ENCODE measurements at regions of chr4 and their contacts with region 1.

Region 1: GRCh38 chr4:88600176-88600838 is 8.0 kb downstream of the HERC3 start:
- DNase-seq: no peak
- ATAC-seq: no peak
- H3K4me3 Mint-ChIP-seq: no peak overlapping the region
- H3K27ac Mint-ChIP-seq: no peak overlapping the region
- H3K4me1 Mint-ChIP-seq: peaks cover 55% of the 10 kb centered on the region
- H3K27me3 Mint-ChIP-seq: no peaks in the 10 kb centered on the region
- CTCF ChIP-seq: no peak

Region 2: GRCh38 chr4:87824352-87824751 is 776.0 kb before region 1 on chr4:
- CTCF ChIA-PET with region 1: no interaction called
- POLR2A ChIA-PET with region 1: no interaction called
- intact Hi-C with region 1: no loop called
- DNase-seq: no peak
- ATAC-seq: no peak
- H3K4me3 Mint-ChIP-seq: no peak overlapping the region
- H3K27ac Mint-ChIP-seq: no peak overlapping the region
- H3K4me1 Mint-ChIP-seq: no peaks in the 10 kb centered on the region
- H3K27me3 Mint-ChIP-seq: peaks cover 19% of the 10 kb centered on the region
- CTCF ChIP-seq: no peak

Region 3: DNA sequence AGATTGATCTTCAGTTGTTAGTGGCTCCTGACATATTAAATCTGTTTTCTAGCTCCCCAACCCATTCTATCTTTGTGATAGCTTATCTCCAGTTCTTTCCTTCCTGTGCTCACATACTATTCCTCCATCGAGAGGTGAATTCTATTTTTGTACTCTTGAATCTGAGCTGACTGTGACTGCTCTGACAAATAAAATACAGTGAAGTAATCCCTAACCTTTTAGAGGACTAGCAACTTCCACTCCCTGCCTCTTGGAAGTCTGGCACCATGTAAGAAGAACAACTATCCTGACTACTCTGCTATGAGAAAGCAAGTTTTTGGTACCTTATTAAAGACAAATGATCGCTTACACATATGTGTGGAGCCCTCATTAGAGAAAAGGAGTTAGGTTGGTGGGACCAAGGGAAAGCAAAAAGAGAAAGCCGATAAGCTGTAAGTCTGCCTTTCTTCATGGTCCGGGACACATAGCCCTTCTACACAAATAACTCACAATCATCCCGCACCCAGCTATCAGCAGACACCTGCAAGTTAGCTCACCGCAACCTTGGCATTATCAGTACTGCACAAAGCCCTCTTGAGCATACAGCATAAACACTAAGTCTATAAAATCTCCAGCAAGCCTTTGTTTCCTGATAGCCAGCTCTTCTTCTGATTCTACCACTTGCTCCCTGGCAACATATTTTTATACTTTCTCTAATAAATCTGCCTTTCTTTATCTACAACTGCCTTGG is 302.4 kb before region 1 on chr4:
- CTCF ChIA-PET with region 1: no interaction called
- POLR2A ChIA-PET with region 1: no interaction called
- intact Hi-C with region 1: no loop called
- DNase-seq: no peak
- ATAC-seq: no peak
- H3K4me3 Mint-ChIP-seq: no peak overlapping the region
- H3K27ac Mint-ChIP-seq: no peak overlapping the region
- H3K4me1 Mint-ChIP-seq: no peaks in the 10 kb centered on the region
- H3K27me3 Mint-ChIP-seq: no peaks in the 10 kb centered on the region
- CTCF ChIP-seq: no peak

Region 4: DNA sequence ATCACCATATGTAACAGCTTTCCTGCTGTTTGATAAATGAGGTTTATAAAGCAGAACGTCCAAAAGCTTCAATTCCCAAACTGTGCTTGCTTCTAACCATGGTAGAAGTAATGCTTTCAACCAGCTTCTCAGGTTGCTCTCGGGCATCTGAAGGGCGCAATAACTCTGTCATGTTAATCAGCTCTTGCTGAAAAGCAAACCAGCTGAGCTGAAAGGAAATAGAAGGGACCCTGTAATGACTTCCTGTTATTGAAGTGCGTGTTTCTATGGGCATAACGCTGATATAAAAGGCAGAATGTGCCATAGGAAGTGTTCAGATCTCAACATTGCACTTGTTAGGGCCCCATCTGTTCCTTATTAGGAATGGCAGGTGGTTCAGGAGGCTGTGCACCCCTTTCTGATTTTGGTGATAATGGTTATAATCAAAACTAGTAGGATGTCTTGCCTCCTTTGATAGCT is 13.1 kb after region 1 on chr4:
- CTCF ChIA-PET with region 1: no interaction called
- POLR2A ChIA-PET with region 1: no interaction called
- intact Hi-C with region 1: loop called (anchors 1 kb)
- DNase-seq: no peak
- ATAC-seq: peak; percentile 89
- H3K4me3 Mint-ChIP-seq: peak overlapping the region; percentile 59
- H3K27ac Mint-ChIP-seq: peak overlapping the region; percentile 70
- H3K4me1 Mint-ChIP-seq: peaks cover 76% of the 10 kb centered on the region
- H3K27me3 Mint-ChIP-seq: no peaks in the 10 kb centered on the region
- CTCF ChIP-seq: no peak

Region 5: DNA sequence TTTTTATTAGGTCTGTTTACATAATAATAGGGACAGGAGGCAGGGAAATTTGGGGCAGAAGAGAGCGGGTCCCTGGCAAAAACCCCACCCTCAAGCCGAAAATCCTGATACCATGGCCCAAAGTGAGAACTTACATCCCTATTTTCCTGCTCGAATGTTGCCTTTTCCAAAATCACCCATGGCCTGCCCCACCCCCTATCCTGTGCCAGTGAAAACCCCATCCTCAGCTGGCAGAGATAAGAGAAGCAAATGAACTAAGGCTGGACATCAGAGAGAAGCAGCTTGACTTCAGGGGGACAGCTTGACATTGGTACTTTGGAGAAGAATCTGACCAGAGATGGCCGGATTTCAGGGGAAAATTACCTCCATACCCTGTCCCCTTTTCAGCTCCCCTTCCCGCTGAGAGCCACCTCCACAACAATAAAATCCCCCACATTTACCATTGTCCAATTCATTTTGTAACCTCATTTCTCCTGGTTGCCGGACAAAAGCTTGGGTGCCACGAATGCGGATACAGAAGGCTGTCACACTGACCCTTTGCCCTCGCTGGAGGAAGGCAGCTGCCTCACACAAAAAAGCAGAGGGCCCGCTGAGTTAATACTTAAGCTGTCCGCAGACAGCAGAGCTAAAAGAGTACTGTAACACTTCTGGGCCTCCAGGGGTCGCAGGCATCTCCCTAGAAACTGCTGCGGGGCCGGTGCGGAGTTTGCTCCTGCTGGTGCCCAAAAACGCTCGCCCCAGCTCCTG is 1040.5 kb after region 1 on chr4:
- CTCF ChIA-PET with region 1: no interaction called
- POLR2A ChIA-PET with region 1: no interaction called
- intact Hi-C with region 1: no loop called
- DNase-seq: no peak
- ATAC-seq: no peak
- H3K4me3 Mint-ChIP-seq: no peak overlapping the region
- H3K27ac Mint-ChIP-seq: no peak overlapping the region
- H3K4me1 Mint-ChIP-seq: no peaks in the 10 kb centered on the region
- H3K27me3 Mint-ChIP-seq: no peaks in the 10 kb centered on the region
- CTCF ChIP-seq: no peak